Motor neuron (in vitro differentiated cells): ENCODE measurements at regions of chr2 and their contacts with region 1.

Region 1: GRCh38 chr2:138395565-138396306 is 105.8 kb upstream of the SPOPL start:
- ATAC-seq: peak in 4 of 8 experiments; percentile 7 to 97 (median 56)
- H3K4me3 ChIP-seq: no peak overlapping the region
- H3K27ac ChIP-seq: no peak overlapping the region
- H3K4me1 ChIP-seq: no peaks in the 10 kb centered on the region

Region 2: GRCh38 chr2:137947728-137948336 is 447.9 kb before region 1 on chr2:
- in situ Hi-C with region 1: loop called in 3 of 9 experiments (anchors 25 kb)
- ATAC-seq: peak in 6 of 8 experiments; percentile 37 to 83 (median 73)
- H3K4me3 ChIP-seq: no peak overlapping the region
- H3K27ac ChIP-seq: no peak overlapping the region
- H3K4me1 ChIP-seq: peaks cover 0 to 8% of the 10 kb centered on the region in 2 donors

Region 3: DNA sequence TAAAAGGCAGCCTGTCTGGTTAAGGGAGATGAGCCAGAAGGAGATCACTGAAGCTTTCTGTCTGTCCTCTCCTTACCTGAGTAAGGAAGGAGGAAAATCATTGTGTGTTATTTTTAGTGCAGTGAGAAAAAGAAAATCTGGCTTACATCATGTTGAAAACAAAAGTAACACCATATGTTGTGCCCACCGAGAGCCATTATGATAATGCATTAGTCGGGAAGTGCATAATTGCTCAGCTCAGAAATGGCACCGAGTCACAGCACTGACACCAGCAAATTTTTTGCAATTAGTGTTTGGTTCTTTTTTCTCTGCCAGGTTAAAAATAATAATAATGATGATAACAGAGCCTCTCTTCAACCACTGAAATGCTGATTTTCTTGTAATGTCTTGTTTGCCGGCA is 384.8 kb before region 1 on chr2:
- in situ Hi-C with region 1: no loop called
- ATAC-seq: peak in 5 of 8 experiments; percentile 30 to 71 (median 51)
- H3K4me3 ChIP-seq: no peak overlapping the region
- H3K27ac ChIP-seq: no peak overlapping the region
- H3K4me1 ChIP-seq: peaks cover 0 to 41% of the 10 kb centered on the region in 2 donors